ENCODE measurements at regions of chr10 and their contacts with region 1.

Region 1: DNA sequence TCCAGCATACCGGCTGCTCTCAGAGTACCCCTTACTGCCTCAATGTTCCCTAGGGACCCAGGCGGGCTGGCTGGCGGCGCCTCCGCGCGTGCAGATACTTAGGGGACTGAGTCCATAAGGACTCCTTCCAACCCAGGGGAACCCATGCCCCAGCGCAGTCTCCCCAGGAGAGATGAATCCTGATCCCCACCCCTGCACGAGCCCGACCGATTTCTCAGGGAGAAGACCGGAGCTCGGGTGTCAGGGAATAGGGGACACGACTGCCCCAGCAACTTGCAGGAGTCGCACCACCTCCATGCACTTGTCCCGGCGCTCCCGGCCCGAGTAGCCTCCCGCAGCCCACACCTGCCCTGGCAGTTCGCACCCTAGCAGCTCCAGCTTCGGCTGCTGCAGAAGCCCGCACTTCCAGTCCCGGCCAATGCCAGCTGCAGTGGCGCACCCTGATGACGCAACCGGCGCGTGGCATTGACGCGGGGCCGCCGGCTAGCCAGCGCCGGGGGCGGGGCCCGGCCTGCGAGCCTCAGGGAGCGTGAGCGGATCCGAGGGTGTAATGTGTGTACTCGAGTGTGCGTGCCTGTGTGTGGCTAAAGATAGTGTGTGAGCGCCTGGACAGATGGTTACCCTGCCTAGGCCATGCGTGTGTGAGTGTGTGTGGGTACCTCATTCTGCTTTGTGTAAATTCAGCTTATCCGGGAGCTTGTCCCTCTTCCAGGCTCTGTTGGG is at the start of gene GPAM:
- DNase-seq: peak; percentile 98
- ATAC-seq: peak; percentile 98
- total RNA-seq, gene GPAM: 29.7 TPM

Region 2: DNA sequence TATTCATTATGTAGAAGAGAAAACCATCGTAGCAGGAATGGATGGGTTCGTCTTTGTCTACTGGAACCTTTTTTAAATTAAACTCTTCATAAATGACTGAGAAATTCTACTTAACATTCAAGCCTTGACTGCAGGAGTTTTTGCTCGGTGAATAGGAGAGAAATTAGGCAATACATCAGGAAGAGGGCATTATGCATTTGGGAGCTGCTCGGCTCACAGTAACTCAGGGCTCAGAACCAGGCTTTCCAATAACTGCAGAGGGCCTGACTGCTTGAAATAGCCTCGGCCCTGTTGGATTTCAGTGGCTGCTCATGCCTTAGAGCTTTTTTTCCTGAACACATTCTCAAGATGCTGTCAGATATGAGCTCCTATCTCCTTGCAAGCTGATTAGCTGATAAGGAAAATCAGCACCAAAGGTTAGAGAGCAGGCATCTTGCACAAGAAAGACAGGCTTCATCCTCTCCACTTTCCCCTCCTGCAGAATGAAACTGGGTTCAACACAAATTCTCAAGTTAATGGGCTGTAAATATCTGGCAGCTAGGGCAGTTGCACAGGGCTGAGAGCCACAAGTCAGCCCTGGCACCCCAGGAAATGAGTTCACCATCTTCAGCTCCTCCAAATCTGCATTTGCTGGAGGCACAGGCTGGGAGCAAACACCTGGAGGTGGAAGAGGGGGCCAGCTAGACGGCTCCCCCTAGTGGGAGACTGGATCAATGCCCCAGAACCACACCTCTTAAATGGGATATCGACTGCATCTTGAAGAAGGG is 124.1 kb after region 1 on chr10:
- intact Hi-C with region 1: loop called (anchors 5 kb)
- DNase-seq: no peak
- ATAC-seq: peak; percentile 82

Region 3: GRCh38 chr10:112409755-112410154 is 226.3 kb after region 1 on chr10:
- intact Hi-C with region 1: no loop called
- DNase-seq: no peak
- ATAC-seq: no peak

Measured in Right ventricle myocardium superior (tissue), 1 donor.